CD8-positive, alpha-beta T cell (primary cell): ENCODE measurements at regions of chr16 and their contacts with region 1.

Region 1: DNA sequence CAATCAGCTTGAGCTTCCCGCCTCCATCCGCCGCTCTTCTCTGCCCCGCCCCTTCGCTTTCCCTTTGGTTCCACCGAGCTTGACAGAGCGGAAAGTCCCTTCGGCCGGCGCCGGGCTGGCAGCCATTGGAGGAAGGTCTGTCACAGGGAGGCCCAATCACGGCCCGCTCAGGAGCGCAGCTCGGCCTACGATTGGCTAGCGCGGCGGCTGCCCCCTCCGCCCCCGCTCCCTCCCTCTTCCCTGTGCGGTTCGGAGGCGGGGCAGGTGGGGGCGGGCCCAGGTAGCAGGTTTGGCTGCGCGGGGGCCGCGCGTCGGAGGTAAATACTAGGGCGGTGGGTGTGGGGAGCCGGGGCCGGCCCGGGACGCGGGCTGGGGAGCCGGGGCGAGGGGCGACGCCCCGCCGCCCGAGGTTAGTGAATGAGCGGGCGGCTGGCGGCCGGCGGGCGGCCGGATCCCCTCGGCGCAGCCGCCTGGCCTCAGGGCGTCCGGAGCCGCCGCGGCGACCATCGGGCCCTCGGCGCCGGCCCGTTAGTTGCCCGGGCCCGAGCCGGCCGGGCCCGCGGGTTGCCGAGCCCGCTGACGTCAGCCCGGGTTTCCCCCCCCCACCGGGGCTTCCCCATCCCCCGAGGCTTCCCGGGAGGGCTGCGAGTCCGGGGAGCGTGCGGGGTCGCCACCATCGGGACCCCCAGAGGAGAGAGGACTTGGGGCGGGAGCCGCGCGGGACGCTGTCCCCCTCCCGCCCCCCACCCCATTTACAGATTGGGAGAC is at the start of gene CYLD:
- DNase-seq: peak; percentile 97 to 100 (median 99)
- ATAC-seq: peak; percentile 88
- H3K4me3 ChIP-seq: peak within 1 kb of the TSS; percentile 91 to 93
- H3K4me3 Mint-ChIP-seq: peak within 1 kb of the TSS; percentile 98
- H3K27ac ChIP-seq: peak within 1 kb of the TSS; percentile 95 to 99
- H3K27ac Mint-ChIP-seq: peak within 1 kb of the TSS; percentile 99
- H3K4me1 ChIP-seq: peaks cover 36% of the 10 kb centered on the region
- H3K4me1 Mint-ChIP-seq: peaks cover 45% of the 10 kb centered on the region
- H3K27me3 ChIP-seq: no peaks in the 10 kb centered on the region
- H3K27me3 Mint-ChIP-seq: no peaks in the 10 kb centered on the region
- CTCF ChIP-seq: no peak
- total RNA-seq, gene CYLD: 341 TPM

Region 2: GRCh38 chr16:50024684-50025536 is 717.1 kb before region 1 on chr16 and contains the start of gene CNEP1R1:
- CTCF ChIA-PET with region 1: interaction called, 3 read pairs
- POLR2A ChIA-PET with region 1: no interaction called
- intact Hi-C with region 1: loop called (anchors 2 kb)
- DNase-seq: peak; percentile 86 to 97 (median 91)
- ATAC-seq: peak; percentile 93
- H3K4me3 ChIP-seq: peak within 1 kb of the TSS; percentile 74 to 79
- H3K4me3 Mint-ChIP-seq: peak within 1 kb of the TSS; percentile 97
- H3K27ac ChIP-seq: peak within 1 kb of the TSS; percentile 49 to 65
- H3K27ac Mint-ChIP-seq: peak within 1 kb of the TSS; percentile 94
- H3K4me1 ChIP-seq: peaks cover 17% of the 10 kb centered on the region
- H3K4me1 Mint-ChIP-seq: peaks cover 27% of the 10 kb centered on the region
- H3K27me3 ChIP-seq: no peaks in the 10 kb centered on the region
- H3K27me3 Mint-ChIP-seq: no peaks in the 10 kb centered on the region
- CTCF ChIP-seq: peak; percentile 99
- total RNA-seq, gene CNEP1R1: 37.6 to 41.0 TPM

Region 3: GRCh38 chr16:50065624-50066481 is 676.1 kb before region 1 on chr16 and contains the start of gene HEATR3:
- CTCF ChIA-PET with region 1: no interaction called
- POLR2A ChIA-PET with region 1: interaction called, 3 read pairs
- intact Hi-C with region 1: loop called (anchors 5 kb)
- DNase-seq: peak; percentile 88 to 97 (median 93)
- ATAC-seq: peak; percentile 86
- H3K4me3 ChIP-seq: peak within 1 kb of the TSS; percentile 78 to 92
- H3K4me3 Mint-ChIP-seq: peak within 1 kb of the TSS; percentile 93
- H3K27ac ChIP-seq: peak within 1 kb of the TSS; percentile 73 to 79
- H3K27ac Mint-ChIP-seq: peak within 1 kb of the TSS; percentile 92
- H3K4me1 ChIP-seq: peaks cover 17% of the 10 kb centered on the region
- H3K4me1 Mint-ChIP-seq: peaks cover 42% of the 10 kb centered on the region
- H3K27me3 ChIP-seq: no peaks in the 10 kb centered on the region
- H3K27me3 Mint-ChIP-seq: no peaks in the 10 kb centered on the region
- CTCF ChIP-seq: no peak
- total RNA-seq, gene HEATR3: 9.3 to 11.4 TPM

Region 4: GRCh38 chr16:50266337-50267091 is 475.5 kb before region 1 on chr16 and contains the start of gene ADCY7:
- CTCF ChIA-PET with region 1: no interaction called
- POLR2A ChIA-PET with region 1: no interaction called
- intact Hi-C with region 1: loop called (anchors 5 kb)
- DNase-seq: peak; percentile 58 to 90 (median 88)
- ATAC-seq: peak; percentile 83
- H3K4me3 ChIP-seq: peak within 1 kb of the TSS; percentile 91 to 94
- H3K4me3 Mint-ChIP-seq: peak within 1 kb of the TSS; percentile 97
- H3K27ac ChIP-seq: peak within 1 kb of the TSS; percentile 77 to 86
- H3K27ac Mint-ChIP-seq: peak within 1 kb of the TSS; percentile 98
- H3K4me1 ChIP-seq: peaks cover 68% of the 10 kb centered on the region
- H3K4me1 Mint-ChIP-seq: peaks cover 71% of the 10 kb centered on the region
- H3K27me3 ChIP-seq: no peaks in the 10 kb centered on the region
- H3K27me3 Mint-ChIP-seq: no peaks in the 10 kb centered on the region
- CTCF ChIP-seq: no peak
- total RNA-seq, gene ADCY7: 117 to 126 TPM

Region 5: GRCh38 chr16:50368410-50369132 is 373.4 kb before region 1 on chr16 and contains the start of gene BRD7:
- CTCF ChIA-PET with region 1: interaction called, 3 read pairs
- POLR2A ChIA-PET with region 1: interaction called, 4 read pairs
- intact Hi-C with region 1: loop called (anchors 1 to 2 kb)
- DNase-seq: peak; percentile 60 to 88 (median 71)
- ATAC-seq: peak; percentile 94
- H3K4me3 ChIP-seq: peak within 1 kb of the TSS; percentile 54 to 60
- H3K4me3 Mint-ChIP-seq: peak within 1 kb of the TSS; percentile 85
- H3K27ac ChIP-seq: peak within 1 kb of the TSS; percentile 56 to 79
- H3K27ac Mint-ChIP-seq: peak within 1 kb of the TSS; percentile 95
- H3K4me1 ChIP-seq: peaks cover 41% of the 10 kb centered on the region
- H3K4me1 Mint-ChIP-seq: peaks cover 52% of the 10 kb centered on the region
- H3K27me3 ChIP-seq: no peaks in the 10 kb centered on the region
- H3K27me3 Mint-ChIP-seq: no peaks in the 10 kb centered on the region
- CTCF ChIP-seq: no peak
- total RNA-seq, gene BRD7: 113 to 117 TPM

Region 6: GRCh38 chr16:50681021-50681885 is 60.7 kb before region 1 on chr16 and contains the start of gene SNX20:
- CTCF ChIA-PET with region 1: interaction called, 22 read pairs
- POLR2A ChIA-PET with region 1: interaction called, 7 read pairs
- intact Hi-C with region 1: loop called (anchors 1 to 2 kb)
- DNase-seq: peak; percentile 43 to 87 (median 72)
- ATAC-seq: peak; percentile 92
- H3K4me3 ChIP-seq: peak within 1 kb of the TSS; percentile 65 to 88
- H3K4me3 Mint-ChIP-seq: peak within 1 kb of the TSS; percentile 92
- H3K27ac ChIP-seq: peak within 1 kb of the TSS; percentile 51 to 86
- H3K27ac Mint-ChIP-seq: peak within 1 kb of the TSS; percentile 97
- H3K4me1 ChIP-seq: peaks cover 74% of the 10 kb centered on the region
- H3K4me1 Mint-ChIP-seq: peaks cover 85% of the 10 kb centered on the region
- H3K27me3 ChIP-seq: no peaks in the 10 kb centered on the region
- H3K27me3 Mint-ChIP-seq: no peaks in the 10 kb centered on the region
- CTCF ChIP-seq: no peak
- total RNA-seq, gene SNX20: 18.6 to 20.1 TPM

Region 7: DNA sequence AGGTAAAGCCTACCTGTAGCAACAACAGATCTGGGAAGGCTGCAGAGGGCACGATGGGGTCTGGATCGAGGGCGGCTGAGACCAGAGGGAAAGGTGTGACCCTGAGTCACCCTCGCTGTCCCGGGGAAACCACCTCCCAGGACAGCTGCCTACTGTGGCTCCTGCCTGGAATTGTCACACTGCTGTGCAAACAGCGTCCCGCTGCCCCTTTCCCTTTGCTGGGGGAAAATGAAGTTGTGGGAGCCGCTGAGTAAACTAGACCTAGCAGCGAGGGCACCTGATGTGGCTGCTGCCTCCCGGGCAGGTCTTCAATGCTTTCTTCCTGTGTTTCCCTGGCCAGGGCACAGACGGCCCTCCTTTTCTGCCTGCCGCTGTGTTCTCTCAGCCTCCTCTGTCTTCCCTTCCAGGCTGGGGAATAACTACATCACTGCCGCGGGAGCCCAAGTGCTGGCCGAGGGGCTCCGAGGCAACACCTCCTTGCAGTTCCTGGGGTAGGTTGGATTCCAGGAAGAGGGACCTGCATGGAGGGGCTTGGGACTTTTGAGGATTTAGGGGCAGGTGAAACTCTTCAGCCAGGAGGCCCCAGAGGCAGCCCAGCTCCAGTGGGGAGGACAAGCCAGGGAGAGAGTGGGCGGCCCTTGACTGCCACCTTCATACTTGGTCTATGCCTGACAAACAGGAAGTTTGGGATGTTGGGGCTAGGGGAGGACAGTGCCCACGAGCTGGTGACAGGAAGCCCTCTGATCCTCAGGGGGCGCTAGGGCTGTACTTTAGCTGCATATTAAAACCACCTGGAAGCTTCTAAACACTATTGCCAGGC is 22.3 kb before region 1 on chr16:
- CTCF ChIA-PET with region 1: interaction called, 24 read pairs
- POLR2A ChIA-PET with region 1: interaction called, 10 read pairs
- intact Hi-C with region 1: loop called (anchors 1 to 2 kb)
- DNase-seq: peak in 6 of 9 experiments; percentile 23 to 71 (median 46)
- ATAC-seq: peak; percentile 67
- H3K4me3 ChIP-seq: no peak overlapping the region
- H3K4me3 Mint-ChIP-seq: no peak overlapping the region
- H3K27ac ChIP-seq: no peak overlapping the region
- H3K27ac Mint-ChIP-seq: no peak overlapping the region
- H3K4me1 ChIP-seq: peaks cover 26% of the 10 kb centered on the region
- H3K4me1 Mint-ChIP-seq: peaks cover 37% of the 10 kb centered on the region
- H3K27me3 ChIP-seq: no peaks in the 10 kb centered on the region
- H3K27me3 Mint-ChIP-seq: no peaks in the 10 kb centered on the region
- CTCF ChIP-seq: peak; percentile 15

Region 8: DNA sequence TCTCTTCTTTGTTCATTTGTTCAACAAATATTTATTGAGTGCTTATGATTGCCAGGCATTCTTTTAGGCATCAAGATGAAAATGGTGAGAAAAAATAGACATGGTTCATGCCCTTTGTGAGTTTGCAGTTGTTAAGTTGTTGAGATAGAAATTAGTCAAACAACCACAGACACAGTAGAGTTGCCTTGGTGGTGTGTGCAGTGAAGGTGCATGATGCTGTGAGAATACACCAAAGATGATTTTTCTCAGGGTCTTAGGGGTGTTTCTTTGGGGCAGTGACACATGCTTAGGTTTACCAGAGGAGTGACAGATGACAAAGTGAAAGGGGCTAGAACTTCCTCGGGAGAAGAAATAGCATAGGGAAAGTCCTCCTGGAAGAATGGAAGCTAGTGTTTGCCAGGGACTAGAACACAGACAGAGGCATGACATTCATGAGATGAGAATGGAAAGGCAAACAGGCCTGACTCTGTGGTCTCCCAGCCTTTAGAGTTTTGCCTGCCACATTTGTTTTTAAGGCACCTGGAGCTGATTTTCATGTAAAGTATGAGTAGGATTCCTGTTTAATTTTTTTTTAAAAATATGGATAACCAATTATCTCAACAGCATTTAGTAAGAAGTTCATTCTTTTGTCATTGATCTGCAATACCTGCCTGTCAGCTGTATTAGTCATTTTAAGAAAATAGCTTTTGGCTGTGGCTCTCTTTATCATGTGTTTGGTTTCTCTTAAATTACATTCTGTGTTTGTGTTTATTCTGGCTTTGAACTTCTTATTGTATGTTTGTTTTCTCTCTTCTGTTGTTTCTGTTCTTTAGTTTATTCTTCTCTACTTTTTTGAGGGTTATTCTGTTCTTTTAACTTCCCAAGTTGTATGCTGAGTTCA is 36.5 kb after region 1 on chr16:
- CTCF ChIA-PET with region 1: no interaction called
- POLR2A ChIA-PET with region 1: no interaction called
- intact Hi-C with region 1: no loop called
- DNase-seq: no peak
- ATAC-seq: no peak
- H3K4me3 ChIP-seq: no peak overlapping the region
- H3K4me3 Mint-ChIP-seq: no peak overlapping the region
- H3K27ac ChIP-seq: peak overlapping the region in 1 of 2 experiments; percentile 19
- H3K27ac Mint-ChIP-seq: peak overlapping the region; percentile 55
- H3K4me1 ChIP-seq: peaks cover 17% of the 10 kb centered on the region
- H3K4me1 Mint-ChIP-seq: peaks cover 67% of the 10 kb centered on the region
- H3K27me3 ChIP-seq: no peaks in the 10 kb centered on the region
- H3K27me3 Mint-ChIP-seq: no peaks in the 10 kb centered on the region
- CTCF ChIP-seq: no peak